Activated naive CD4-positive, alpha-beta T cell treated with anti-CD3 and anti-CD28 coated beads, Interleukin-2, amount 10 ng/mL, durations not matched to agents 7 days and 5 days (primary cell): ENCODE measurements at regions of chr19 and their contacts with region 1.

Region 1: GRCh38 chr19:50537762-50538230 is 24.1 kb upstream of the ASPDH start:
- DNase-seq: peak; percentile 76
- H3K4me3 Mint-ChIP-seq: no peak overlapping the region
- H3K27ac Mint-ChIP-seq: no peak overlapping the region
- H3K4me1 Mint-ChIP-seq: peaks cover 2% of the 10 kb centered on the region
- H3K27me3 Mint-ChIP-seq: peaks cover 28% of the 10 kb centered on the region

Region 2: GRCh38 chr19:50522881-50523280 is 14.9 kb before region 1 on chr19:
- CTCF ChIA-PET with region 1: interaction called, 10 read pairs
- DNase-seq: no peak
- H3K4me3 Mint-ChIP-seq: no peak overlapping the region
- H3K27ac Mint-ChIP-seq: no peak overlapping the region
- H3K4me1 Mint-ChIP-seq: no peaks in the 10 kb centered on the region
- H3K27me3 Mint-ChIP-seq: peaks cover 7% of the 10 kb centered on the region

Region 3: GRCh38 chr19:50556282-50557008 is 18.6 kb after region 1 on chr19:
- CTCF ChIA-PET with region 1: interaction called, 36 read pairs
- DNase-seq: peak; percentile 85
- H3K4me3 Mint-ChIP-seq: peak overlapping the region; percentile 80
- H3K27ac Mint-ChIP-seq: no peak overlapping the region
- H3K4me1 Mint-ChIP-seq: peaks cover 10% of the 10 kb centered on the region
- H3K27me3 Mint-ChIP-seq: peaks cover 75% of the 10 kb centered on the region

Region 4: DNA sequence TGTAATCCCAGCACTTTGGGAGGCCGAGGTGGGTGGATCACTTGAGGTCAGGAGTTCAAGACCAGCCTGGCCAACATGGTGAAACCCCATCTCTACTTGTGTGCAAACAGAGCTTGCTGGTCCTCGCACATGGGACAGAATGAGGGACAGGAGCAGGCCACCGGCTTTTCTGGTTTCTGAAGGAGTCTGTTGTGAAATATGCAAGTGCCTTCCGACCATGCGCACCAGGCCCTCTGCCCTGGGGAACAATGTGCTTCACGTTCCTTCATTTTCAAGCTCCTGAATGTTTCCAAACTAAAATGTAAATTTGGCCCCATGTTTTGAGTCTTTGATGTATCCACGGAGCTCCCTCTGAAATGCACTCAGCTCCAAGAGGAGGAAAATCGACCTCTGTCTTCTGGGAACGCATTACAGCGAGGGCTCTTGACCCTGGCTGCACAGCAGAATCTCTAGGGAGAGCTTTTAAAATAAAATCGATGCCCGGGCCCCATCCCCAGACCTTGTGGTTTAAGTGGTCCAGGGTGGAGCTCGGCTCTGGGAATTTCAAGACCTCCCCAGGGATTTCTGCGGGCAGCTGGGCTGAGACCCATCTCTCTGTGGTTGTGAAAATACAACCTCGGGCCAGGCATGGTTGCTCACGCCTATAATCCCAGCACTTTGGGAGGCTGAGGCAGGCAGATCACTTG is 243.1 kb after region 1 on chr19:
- CTCF ChIA-PET with region 1: interaction called, 25 read pairs
- DNase-seq: no peak
- H3K4me3 Mint-ChIP-seq: no peak overlapping the region
- H3K27ac Mint-ChIP-seq: no peak overlapping the region
- H3K4me1 Mint-ChIP-seq: peaks cover 6% of the 10 kb centered on the region
- H3K27me3 Mint-ChIP-seq: peaks cover 60% of the 10 kb centered on the region

Region 5: GRCh38 chr19:50922317-50922853 is 384.6 kb after region 1 on chr19:
- CTCF ChIA-PET with region 1: interaction called, 15 read pairs
- DNase-seq: peak; percentile 84
- H3K4me3 Mint-ChIP-seq: no peak overlapping the region
- H3K27ac Mint-ChIP-seq: no peak overlapping the region
- H3K4me1 Mint-ChIP-seq: peaks cover 8% of the 10 kb centered on the region
- H3K27me3 Mint-ChIP-seq: peaks cover 11% of the 10 kb centered on the region